Left lung (tissue), 14 donors: ENCODE measurements at regions of chr10 and their contacts with region 1.

Region 1: GRCh38 chr10:6667679-6668270 is 87.7 kb upstream of the PRKCQ start:
- DNase-seq: peak in 1 of 4 donors; percentile 51
- ATAC-seq: peak; percentile 79
- H3K4me3 ChIP-seq: no peak overlapping the region
- H3K27ac ChIP-seq: no peak overlapping the region
- H3K4me1 ChIP-seq: no peaks in the 10 kb centered on the region
- H3K27me3 ChIP-seq: peaks cover 3 to 27% of the 10 kb centered on the region in 2 donors
- CTCF ChIP-seq: peak in 1 of 2 donors; percentile 16

Region 2: DNA sequence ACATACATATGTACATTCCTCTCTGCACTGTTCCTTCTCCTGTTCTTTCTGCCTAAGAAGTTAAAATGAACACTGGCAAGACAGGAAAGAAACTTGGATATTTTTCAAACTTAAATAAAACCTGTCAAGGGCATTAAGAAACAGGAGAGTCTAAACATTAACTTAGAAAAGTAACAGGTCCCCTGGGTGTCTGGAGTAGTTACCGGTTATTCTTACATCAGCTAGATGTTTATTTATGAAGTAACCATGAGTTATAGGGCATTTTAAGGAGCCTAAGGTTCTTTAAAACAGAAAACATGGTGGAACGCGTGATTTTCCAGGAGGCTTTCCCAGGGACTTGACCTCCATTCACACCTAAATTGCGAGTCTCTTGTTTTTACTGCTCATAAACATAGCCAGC is 235.9 kb before region 1 on chr10:
- intact Hi-C with region 1: loop called in 1 of 2 experiments (anchors 10 kb)
- DNase-seq: peak in 1 of 4 donors; percentile 37
- ATAC-seq: peak; percentile 57
- H3K4me3 ChIP-seq: no peak overlapping the region
- H3K27ac ChIP-seq: no peak overlapping the region
- H3K4me1 ChIP-seq: no peaks in the 10 kb centered on the region
- H3K27me3 ChIP-seq: no peaks in the 10 kb centered on the region
- CTCF ChIP-seq: no peak